PC-9 (cell line): ENCODE measurements at regions of chr18 and their contacts with region 1.

Region 1: DNA sequence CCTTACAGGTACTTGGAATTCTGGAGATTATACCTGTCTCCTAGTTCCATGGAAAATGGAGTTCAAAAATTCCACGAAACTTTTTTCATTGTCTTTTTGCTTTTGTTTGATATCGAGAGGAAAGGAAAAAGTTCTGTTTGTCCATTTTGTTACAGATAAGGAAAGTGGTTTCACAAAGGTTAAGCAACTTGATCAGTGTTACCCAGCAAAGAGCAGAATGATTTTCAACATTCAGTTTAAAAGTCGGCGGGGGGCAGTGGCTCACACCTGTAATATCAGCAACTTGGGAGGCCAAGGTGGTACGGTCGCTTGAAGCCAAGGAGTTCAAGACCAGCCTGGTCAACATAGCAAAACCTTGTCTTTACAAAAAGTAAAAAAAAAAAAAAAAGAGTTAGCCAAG is 118.8 kb downstream of the LDLRAD4 start:
- DNase-seq: no peak
- H3K4me3 ChIP-seq: no peak overlapping the region
- H3K27ac ChIP-seq: no peak overlapping the region
- H3K4me1 ChIP-seq: no peaks in the 10 kb centered on the region
- H3K27me3 ChIP-seq: peaks cover 43% of the 10 kb centered on the region
- CTCF ChIP-seq: no peak

Region 2: DNA sequence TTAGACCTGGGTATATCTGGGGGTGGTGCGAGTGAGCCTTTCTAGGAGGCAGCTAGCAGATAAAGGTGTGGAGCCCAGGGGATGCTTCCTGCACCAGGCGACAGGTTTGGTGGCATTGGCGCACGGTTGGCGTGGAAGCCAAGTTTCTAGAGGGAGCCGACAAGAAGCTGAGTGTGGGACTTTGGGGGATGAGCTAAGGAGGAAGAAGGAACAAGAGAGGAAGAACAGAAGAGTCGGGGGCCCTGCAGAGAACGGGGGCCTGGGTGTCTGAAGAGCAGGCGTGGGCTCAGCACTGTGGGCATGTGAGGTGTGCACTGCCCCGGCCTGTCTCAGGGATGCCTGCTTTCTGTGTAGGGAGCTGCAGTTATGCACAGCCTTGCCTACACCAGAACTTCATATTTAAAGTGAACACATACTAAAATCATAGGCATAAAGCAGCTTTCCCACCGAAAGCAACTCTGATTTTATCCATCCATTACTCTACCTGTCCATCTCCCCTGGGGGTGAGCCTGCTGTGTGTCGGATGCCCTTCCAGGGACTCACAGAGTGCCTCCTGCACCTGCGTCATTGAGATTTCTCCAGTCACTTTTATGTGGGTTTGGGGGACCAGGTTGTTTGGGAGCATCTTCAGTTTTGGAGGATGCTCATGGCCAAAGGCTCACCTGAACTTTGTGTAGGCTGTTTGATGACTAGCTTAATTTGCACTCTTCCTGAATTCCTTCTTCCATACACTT is 30.9 kb after region 1 on chr18:
- CTCF ChIA-PET with region 1: no interaction called
- POLR2A ChIA-PET with region 1: interaction called, 10 read pairs
- intact Hi-C with region 1: no loop called
- DNase-seq: no peak
- H3K4me3 ChIP-seq: no peak overlapping the region
- H3K27ac ChIP-seq: no peak overlapping the region
- H3K4me1 ChIP-seq: no peaks in the 10 kb centered on the region
- H3K27me3 ChIP-seq: peaks cover 95% of the 10 kb centered on the region
- CTCF ChIP-seq: no peak